Endothelial cell of umbilical vein (primary cell): ENCODE measurements at regions of chr12 and their contacts with region 1.

Region 1: GRCh38 chr12:122974274-122974891 is 661 bp upstream of the OGFOD2 start:
- DNase-seq: peak; percentile 99
- H3K4me3 ChIP-seq: peak overlapping the region; percentile 65 to 87 (median 84)
- H3K27ac ChIP-seq: peak overlapping the region; percentile 99
- H3K4me1 ChIP-seq: peaks cover 12% of the 10 kb centered on the region
- H3K27me3 ChIP-seq: no peaks in the 10 kb centered on the region
- CTCF ChIP-seq: no peak
- POLR2A ChIP-seq: no peak

Region 2: DNA sequence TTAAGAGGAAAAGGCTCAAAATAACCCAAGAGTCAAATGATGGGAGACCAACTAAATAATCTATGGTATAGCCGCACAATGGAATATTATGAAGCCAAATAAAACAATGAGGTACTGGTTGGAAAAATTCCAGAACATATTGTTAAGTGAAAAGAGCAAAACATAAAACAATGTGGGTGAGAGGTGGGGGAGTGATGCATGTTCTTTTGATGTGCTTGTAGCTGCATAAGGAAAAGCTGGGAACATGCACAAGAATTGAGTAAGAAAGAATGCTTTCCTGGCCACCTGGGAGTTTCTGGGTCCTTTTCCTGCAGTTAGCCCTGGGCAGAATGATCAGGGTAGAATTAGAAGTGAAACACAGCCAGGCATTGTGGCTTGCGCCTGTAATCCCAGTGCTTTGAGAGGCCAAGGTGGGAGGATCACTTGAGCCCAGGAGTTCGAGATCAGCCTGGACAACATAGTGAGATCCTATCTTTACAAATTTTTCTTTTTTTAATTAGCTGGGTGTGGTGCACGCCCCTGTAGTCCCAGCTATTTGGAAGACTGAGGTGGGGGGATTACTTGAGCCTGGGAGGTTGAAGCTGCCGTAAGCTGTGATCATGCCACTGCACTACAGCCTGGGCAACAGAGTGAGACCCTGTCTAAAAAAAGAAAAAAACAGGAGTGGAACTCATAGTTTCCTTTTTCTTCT is 16.0 kb before region 1 on chr12:
- CTCF ChIA-PET with region 1: interaction called, 4 read pairs
- POLR2A ChIA-PET with region 1: interaction called, 5 read pairs
- dilution Hi-C with region 1: no loop called
- intact Hi-C with region 1: loop called (anchors 1 kb)
- DNase-seq: peak; percentile 98
- H3K4me3 ChIP-seq: no peak overlapping the region
- H3K27ac ChIP-seq: peak overlapping the region; percentile 80
- H3K4me1 ChIP-seq: peaks cover 12% of the 10 kb centered on the region
- H3K27me3 ChIP-seq: no peaks in the 10 kb centered on the region
- CTCF ChIP-seq: no peak
- POLR2A ChIP-seq: peak; percentile 38

Region 3: GRCh38 chr12:122984612-122985337 is 10.4 kb after region 1 on chr12:
- CTCF ChIA-PET with region 1: no interaction called
- POLR2A ChIA-PET with region 1: no interaction called
- dilution Hi-C with region 1: no loop called
- intact Hi-C with region 1: no loop called
- DNase-seq: no peak
- H3K4me3 ChIP-seq: no peak overlapping the region
- H3K27ac ChIP-seq: no peak overlapping the region
- H3K4me1 ChIP-seq: peaks cover 30% of the 10 kb centered on the region
- H3K27me3 ChIP-seq: no peaks in the 10 kb centered on the region
- CTCF ChIP-seq: no peak
- POLR2A ChIP-seq: no peak

Region 4: DNA sequence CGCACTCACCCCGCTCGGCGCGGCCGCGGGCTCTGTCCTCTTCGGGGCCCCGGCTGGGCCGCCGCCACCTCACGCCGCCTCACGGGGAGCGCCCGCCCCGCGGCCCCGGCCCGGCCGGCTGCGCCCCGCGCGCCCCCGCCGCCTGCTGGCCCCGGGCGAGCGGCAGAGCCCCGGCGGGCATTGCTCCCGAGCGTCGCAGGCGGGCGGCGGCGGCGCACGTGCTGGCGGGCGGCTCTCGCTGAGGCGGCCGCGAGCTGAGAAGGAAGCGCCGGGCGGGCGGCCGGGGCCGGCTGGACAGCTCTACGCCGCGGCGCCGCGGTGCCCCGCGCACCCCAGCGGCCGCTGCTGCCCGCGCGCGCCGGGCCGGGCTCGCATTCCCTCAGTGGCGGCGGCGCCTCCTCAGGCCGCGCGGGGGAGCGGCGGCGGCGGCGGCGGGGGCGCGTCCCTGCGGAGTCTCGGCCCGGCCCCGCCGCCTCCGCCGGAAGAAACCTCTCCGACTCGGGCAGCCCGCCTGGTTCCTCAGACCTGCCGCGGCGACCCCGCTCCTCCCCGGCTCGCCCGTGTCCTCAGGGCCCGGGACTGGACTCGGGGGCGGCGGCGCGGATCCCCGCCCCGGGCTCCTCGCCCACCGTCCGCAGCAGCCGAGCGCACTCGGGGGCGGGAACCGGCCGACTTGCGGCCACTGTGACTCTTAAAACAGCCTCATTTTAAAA is 176.5 kb after region 1 on chr12 and contains the start of gene PITPNM2:
- CTCF ChIA-PET with region 1: interaction called, 5 read pairs
- POLR2A ChIA-PET with region 1: no interaction called
- dilution Hi-C with region 1: no loop called
- intact Hi-C with region 1: loop called (anchors 2 kb)
- DNase-seq: peak; percentile 41
- H3K4me3 ChIP-seq: peak within 1 kb of the TSS; percentile 61 to 72 (median 66)
- H3K27ac ChIP-seq: no peak within 1 kb of the TSS
- H3K4me1 ChIP-seq: peaks cover 14% of the 10 kb centered on the region
- H3K27me3 ChIP-seq: no peaks in the 10 kb centered on the region
- CTCF ChIP-seq: no peak
- POLR2A ChIP-seq: no peak
- total RNA-seq, gene PITPNM2: 15.9 and 21.4 TPM in 2 replicates